ENCODE measurements at regions of chr6 and their contacts with region 1.

Region 1: GRCh38 chr6:14046476-14047068 is 71.0 kb upstream of the CD83 start:
- DNase-seq: peak; percentile 62
- H3K4me3 Mint-ChIP-seq: no peak overlapping the region
- H3K27ac Mint-ChIP-seq: no peak overlapping the region
- H3K4me1 Mint-ChIP-seq: no peaks in the 10 kb centered on the region
- H3K27me3 Mint-ChIP-seq: peaks cover 32% of the 10 kb centered on the region
- CTCF ChIP-seq: peak; percentile 67

Region 2: DNA sequence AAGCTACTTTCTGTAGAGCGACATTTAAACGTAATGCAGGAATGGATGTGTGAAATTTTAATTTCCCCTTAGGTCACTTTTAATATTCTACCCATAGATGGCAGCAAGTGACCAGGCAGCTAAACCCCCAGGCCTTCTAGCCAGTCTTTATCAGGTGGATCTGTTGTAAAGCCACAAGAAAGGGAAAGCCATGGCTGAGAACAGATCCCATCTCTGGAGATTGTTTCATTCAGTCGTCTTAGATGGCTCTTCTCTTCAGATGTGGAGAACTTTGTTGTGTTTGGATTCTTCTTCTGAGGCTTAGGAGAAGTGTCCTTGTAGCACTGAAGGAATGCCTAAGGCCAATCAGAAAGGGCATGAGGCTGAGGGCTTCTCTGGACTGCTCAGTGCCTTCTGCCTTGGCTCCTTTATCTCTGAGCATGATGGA is 137.6 kb before region 1 on chr6:
- CTCF ChIA-PET with region 1: interaction called, 83 read pairs
- POLR2A ChIA-PET with region 1: interaction called, 3 read pairs
- intact Hi-C with region 1: loop called (anchors 1 kb)
- DNase-seq: peak; percentile 74
- H3K4me3 Mint-ChIP-seq: no peak overlapping the region
- H3K27ac Mint-ChIP-seq: no peak overlapping the region
- H3K4me1 Mint-ChIP-seq: peaks cover 8% of the 10 kb centered on the region
- H3K27me3 Mint-ChIP-seq: peaks cover 28% of the 10 kb centered on the region
- CTCF ChIP-seq: peak; percentile 74

Region 3: DNA sequence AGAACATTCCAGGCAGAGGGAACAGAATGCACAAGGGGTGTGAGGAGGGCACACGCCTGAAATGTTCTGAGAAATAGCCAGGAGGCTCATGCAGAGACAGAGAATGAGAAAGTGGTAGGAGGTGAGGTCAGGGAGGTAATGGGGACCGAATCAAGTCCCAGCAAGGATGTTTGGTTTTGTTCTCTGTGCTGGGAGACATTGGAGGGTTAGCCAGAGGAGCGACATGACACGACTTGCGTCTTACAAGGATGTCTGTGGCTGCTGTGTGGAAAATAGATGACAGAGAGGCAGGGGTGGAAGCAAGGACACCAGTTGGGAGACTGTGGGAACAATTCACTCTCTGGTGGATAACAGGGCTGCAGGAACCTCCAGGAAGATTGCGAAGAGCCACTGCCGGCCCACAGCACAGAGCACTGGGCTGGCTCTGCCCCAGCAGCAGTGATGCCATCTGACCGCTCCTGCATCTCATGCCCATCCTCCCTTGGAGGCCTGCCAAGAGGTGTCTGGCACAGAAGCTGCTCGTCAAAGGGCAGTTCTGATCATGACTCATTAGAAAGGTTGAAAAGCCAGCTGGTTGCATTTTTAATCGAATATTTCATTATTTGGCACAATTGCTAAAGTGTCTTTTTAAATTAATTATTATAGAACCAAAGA is 13.3 kb after region 1 on chr6:
- CTCF ChIA-PET with region 1: interaction called, 17 read pairs
- POLR2A ChIA-PET with region 1: interaction called, 4 read pairs
- intact Hi-C with region 1: no loop called
- DNase-seq: peak; percentile 95
- H3K4me3 Mint-ChIP-seq: peak overlapping the region; percentile 8
- H3K27ac Mint-ChIP-seq: peak overlapping the region; percentile 27
- H3K4me1 Mint-ChIP-seq: peaks cover 18% of the 10 kb centered on the region
- H3K27me3 Mint-ChIP-seq: no peaks in the 10 kb centered on the region
- CTCF ChIP-seq: no peak

Region 4: GRCh38 chr6:14286144-14286543 is 239.6 kb after region 1 on chr6:
- CTCF ChIA-PET with region 1: no interaction called
- POLR2A ChIA-PET with region 1: no interaction called
- intact Hi-C with region 1: no loop called
- DNase-seq: peak; percentile 90
- H3K4me3 Mint-ChIP-seq: no peak overlapping the region
- H3K27ac Mint-ChIP-seq: peak overlapping the region; percentile 44
- H3K4me1 Mint-ChIP-seq: peaks cover 19% of the 10 kb centered on the region
- H3K27me3 Mint-ChIP-seq: no peaks in the 10 kb centered on the region
- CTCF ChIP-seq: no peak

Measured in MCF 10A (cell line).